Cardiac septum (tissue), 1 donor: ENCODE measurements at regions of chr16 and their contacts with region 1.

Region 1: DNA sequence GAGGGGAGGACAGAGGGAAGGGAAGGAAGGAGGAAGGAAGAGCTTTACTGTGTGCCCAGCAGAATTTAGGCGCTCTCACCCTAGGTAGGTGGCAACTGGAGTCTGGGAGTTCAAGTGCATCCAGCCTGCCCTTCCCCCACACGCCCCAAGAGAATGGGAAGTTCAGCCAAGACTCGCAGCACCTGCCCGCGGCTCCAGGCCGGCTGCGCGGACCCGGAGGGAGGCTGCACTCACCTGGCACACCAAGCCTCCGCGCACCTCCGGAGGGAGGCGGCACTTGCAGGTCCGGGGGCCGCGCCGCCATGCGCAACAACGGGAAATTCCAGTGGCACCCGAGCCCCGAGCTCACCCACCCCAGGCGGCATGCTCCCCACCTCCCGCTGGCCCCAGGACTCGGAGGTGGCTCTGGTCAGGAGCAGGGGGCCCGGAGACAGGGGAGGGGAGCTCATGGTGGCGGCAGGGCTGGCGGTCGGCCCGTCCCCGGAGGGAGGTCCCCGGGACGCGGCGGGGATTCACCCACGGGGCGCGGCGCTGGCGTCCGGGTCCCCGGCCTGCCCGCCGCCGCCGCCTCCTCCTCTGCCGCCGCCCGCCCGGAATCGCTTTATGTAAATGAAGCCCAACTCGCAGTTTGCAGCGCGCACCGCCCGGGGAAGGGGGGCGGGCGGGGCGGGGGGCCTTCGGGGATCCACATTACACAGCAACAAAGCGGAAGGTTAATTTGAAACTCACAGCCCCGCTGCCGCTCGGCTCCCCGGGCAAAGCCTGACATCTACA is at the start of gene ZFHX3:
- DNase-seq: no peak
- total RNA-seq, gene ZFHX3: 15.7 TPM

Region 2: DNA sequence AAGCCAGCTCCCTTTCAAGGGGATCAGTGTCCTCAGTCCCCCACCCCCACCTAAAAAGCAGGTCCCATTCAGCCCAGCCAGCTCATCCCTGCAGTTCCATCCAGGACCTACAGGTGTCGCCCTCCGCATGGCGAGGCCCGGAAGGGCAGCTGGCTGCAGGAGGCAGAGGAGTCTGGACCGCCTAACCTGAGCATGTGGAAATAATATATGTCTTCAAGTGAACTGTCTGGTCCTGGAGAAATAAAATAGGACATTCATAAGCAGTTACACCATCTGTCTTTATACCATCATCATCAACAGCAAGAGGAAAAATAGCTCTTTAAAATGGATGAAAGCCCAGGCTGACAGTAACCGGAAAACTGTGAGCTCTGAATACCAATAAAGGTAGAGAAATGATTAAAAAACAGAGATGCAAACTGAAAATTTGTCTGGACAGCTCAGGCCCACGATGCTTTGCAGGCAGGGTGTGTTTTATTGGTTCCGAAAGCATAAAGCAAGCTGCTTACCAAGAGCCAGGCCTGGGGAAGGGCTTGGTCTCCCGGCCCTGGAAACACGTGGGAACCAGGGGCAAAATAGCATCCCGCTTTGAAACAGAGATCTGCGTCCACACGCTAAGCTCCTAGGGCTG is 215.0 kb before region 1 on chr16:
- intact Hi-C with region 1: loop called (anchors 5 kb)
- DNase-seq: peak; percentile 91

Region 3: DNA sequence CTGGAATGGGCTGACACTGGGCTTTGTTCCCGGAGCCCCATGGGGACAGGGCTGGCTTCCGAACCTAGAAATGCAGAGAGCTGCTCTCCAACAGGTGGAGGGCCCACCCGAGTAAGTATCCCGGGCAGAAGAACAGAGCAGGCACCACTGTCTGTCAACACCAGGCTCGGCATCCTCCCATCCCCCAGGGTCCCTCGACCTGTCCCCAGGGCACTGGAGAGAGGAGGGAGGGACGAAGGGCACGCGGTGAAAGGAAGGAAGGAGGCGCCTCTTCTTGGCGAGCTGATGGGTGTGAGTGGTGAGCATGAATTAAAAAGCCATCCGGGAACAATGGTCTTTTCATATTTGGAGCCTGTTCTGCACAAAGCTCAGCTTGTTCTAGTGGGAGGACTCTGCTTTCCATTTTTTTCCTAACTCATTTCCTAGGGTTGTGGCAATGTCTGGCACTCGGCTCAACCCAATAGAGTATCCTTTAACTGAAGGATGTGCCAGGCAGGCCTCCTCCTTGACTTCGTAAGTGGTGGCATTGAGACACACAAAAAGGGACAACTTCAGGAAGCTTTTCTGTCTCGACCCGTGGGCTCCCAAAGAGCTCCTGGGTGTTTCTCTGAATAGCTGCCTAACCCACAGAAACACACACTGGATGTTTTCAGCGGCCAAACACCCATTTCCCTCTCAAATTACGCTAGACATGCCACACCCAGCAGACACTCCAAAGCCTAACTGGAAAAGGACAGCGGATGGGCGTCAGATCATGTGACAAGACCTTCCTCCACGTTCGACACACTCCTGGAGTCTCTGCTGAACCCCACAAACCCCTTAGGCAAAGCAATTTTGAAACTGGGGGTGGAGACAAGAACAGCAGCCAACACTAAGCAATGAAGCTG is 47.4 kb before region 1 on chr16:
- intact Hi-C with region 1: loop called (anchors 5 kb)
- DNase-seq: peak; percentile 65